ENCODE measurements at regions of chr5 and their contacts with region 1.

Region 1: DNA sequence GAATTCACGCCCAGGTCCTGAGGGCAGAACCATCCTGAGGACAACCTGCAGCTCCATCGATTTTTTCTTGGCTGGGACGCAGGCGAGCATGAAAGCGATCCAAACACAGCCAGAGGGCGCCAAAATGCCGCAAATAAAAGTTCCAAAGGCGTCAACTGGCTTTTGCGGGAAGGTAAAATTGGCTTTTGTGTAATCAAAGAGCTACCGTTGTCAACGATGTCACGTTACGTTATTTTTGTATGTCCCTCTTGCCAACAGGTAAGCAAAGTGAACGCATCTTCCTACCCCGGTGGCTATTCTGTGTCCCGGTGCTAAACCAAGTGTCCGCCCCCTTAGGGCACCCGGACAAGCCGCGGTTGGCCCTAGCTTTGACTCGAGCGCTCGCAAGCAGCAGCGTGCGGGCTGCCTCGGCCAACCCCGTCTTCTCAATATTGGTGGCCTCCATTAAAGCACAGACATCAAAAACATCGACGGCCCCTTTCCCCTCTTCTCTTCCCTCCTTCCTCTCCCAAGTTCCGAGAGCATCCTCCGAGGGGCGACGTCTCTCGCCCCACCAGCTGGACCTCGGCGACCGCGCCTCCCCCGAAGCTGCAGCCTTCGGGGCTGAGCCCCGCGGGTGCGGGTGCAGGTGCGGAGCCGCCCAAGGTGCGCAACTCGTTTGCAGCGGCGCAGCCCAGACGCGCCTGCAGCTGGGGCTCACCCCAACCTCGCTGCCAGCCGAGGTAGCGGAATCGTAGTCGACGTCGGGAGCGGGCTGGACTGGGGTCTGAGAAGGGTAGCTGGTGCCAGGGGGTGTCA is 1.1 kb upstream of the BASP1 start:
- DNase-seq: peak; percentile 73
- CTCF ChIP-seq: peak; percentile 80

Region 2: DNA sequence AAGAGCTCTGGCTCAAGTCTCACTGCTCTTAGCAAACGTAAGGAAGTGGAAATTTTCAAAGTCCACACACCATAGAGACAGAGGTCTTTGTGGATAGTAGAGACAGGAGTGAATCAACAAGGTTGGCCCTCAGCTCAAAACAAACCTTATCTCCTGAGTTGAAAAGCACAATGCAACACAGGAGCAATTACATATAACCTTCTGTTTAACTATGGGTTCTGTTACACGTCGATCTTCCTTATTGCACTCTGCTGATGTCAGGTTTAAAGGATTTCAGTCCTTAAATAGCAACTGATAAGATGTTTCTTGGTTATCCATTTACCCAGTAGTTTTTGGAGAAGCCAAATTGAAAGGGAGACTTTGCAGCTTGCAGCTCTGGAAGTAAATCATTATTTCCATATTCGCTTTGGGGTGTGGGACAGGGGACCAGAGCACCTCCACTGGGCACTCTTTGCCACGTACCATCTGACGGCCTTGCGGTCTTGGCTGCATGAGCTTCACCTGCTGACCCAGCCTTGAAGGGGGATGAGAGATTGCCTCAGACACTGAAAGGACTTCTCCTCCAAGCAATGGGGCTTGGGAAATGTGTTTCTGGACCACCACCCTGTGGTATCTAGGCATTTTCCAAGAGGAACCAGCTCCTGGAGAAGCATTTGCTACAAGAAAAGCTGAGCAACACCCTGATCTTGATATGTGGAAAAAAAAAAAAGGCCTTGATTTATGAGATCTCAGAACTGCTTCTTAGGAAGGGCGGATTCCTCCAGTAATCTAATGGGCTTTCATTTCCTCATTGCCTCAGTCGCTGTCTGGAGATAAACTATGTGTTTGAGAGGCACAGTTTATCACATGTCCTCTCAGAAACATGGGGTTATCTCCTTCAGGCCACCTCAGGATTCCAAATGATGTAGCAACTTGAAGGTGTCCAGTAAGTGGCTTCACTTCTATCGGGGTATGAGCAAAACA is 694.6 kb before region 1 on chr5:
- CTCF ChIA-PET with region 1: no interaction called
- POLR2A ChIA-PET with region 1: no interaction called
- DNase-seq: no peak
- CTCF ChIP-seq: no peak

Region 3: DNA sequence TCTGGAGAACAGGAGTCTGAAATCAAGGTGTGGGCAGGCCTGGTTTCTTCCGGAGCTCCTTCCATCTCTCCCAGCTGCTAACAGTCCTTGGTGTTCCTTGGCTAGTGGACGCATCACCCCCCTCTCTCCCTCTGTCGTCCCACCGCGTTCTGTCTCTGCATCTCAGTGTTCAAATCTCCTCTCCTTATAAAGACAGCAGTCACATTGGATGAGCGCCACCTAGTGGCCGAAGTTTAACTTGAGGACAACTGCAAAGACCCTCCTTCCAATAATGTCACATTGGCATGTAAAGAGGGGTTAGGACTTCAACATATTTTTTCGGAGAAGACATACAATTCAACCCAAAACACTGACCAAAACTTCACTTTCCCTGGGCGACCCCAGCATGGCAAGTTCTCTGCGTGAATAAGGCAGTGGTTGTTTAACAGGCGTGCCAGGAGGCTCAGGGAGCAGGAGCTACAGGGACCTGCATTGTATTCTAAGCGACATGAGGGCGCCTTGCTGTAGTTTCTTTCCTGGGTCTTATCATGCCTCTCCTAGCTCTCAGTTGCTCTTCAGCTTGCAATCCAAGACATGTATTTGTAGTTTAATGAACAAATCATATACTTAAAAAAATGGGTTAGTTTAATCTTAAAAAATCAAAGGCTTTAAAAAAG is 26.9 kb before region 1 on chr5:
- CTCF ChIA-PET with region 1: interaction called, 23 read pairs
- POLR2A ChIA-PET with region 1: no interaction called
- DNase-seq: peak; percentile 57
- CTCF ChIP-seq: peak; percentile 83

Region 4: GRCh38 chr5:17204133-17204489 is 12.3 kb before region 1 on chr5:
- CTCF ChIA-PET with region 1: interaction called, 15 read pairs
- POLR2A ChIA-PET with region 1: no interaction called
- DNase-seq: no peak
- CTCF ChIP-seq: no peak

Region 5: GRCh38 chr5:17238521-17239041 is 22.2 kb after region 1 on chr5:
- CTCF ChIA-PET with region 1: interaction called, 11 read pairs
- POLR2A ChIA-PET with region 1: no interaction called
- DNase-seq: no peak
- CTCF ChIP-seq: no peak

Region 6: GRCh38 chr5:17282283-17283120 is 66.1 kb after region 1 on chr5:
- CTCF ChIA-PET with region 1: interaction called, 14 read pairs
- POLR2A ChIA-PET with region 1: no interaction called
- DNase-seq: peak; percentile 77
- CTCF ChIP-seq: peak; percentile 1

Region 7: DNA sequence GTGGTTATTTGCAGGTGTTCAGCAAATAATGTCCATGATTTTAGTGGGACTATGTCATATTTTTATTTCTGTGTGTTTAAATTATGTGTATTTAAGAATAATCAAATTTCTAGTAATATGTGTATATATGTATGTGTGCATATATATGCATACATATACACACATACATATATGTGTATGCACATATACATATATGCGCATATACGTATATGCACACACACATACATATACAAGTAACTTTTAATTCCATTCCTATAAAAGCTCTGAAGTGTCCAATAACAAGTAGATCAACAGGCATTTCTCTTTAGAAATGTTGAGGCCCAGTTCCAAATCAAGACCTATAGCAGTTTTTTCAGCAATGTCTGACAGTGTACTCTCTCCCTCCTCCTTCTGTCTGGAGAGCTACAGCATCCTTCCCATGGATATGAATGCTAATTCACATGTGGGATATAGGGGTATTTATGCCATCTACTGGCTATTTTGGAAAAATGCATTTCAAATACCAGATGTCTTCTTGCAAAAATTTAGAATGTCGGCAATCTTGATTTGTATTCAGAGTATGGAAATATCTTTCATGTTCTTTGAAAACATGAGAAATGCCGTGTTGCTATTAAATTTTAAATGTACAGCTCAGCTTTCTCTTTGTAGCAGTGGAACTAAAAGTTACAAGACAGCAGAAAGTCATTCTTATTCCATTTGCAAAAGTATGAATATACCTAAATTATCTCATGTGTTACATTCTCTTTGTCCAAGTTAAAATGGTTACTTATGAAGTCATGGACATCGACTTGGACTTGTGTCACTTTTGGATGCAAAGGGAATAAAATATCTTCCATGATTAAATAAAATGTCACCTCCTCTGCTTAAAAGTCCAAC is 1065.5 kb after region 1 on chr5:
- CTCF ChIA-PET with region 1: interaction called, 45 read pairs
- POLR2A ChIA-PET with region 1: no interaction called
- DNase-seq: peak; percentile 13
- CTCF ChIP-seq: peak; percentile 30

Region 8: GRCh38 chr5:18314192-18314778 is 1097.9 kb after region 1 on chr5:
- CTCF ChIA-PET with region 1: interaction called, 34 read pairs
- POLR2A ChIA-PET with region 1: no interaction called
- DNase-seq: peak; percentile 19
- CTCF ChIP-seq: peak; percentile 41

Measured in GM10248 (cell line).